HCT116 (cell line): ENCODE measurements at regions of chr3 and their contacts with region 1.

Region 1: GRCh38 chr3:11096266-11097135 is 57.8 kb upstream of the HRH1 start:
- DNase-seq: peak; percentile 74
- ATAC-seq: peak; percentile 88
- H3K4me3 ChIP-seq: peak overlapping the region; percentile 44 to 56
- H3K27ac ChIP-seq: peak overlapping the region; percentile 76
- H3K4me1 ChIP-seq: peaks cover 22 to 32% of the 10 kb centered on the region in 2 experiments; a peak in 3 of 4 replicates
- H3K27me3 ChIP-seq: no peaks in the 10 kb centered on the region
- CTCF ChIP-seq: no peak; a peak in 1 of 6 replicates
- POLR2A ChIP-seq: no peak
- RAD21 ChIP-seq: no peak

Region 2: DNA sequence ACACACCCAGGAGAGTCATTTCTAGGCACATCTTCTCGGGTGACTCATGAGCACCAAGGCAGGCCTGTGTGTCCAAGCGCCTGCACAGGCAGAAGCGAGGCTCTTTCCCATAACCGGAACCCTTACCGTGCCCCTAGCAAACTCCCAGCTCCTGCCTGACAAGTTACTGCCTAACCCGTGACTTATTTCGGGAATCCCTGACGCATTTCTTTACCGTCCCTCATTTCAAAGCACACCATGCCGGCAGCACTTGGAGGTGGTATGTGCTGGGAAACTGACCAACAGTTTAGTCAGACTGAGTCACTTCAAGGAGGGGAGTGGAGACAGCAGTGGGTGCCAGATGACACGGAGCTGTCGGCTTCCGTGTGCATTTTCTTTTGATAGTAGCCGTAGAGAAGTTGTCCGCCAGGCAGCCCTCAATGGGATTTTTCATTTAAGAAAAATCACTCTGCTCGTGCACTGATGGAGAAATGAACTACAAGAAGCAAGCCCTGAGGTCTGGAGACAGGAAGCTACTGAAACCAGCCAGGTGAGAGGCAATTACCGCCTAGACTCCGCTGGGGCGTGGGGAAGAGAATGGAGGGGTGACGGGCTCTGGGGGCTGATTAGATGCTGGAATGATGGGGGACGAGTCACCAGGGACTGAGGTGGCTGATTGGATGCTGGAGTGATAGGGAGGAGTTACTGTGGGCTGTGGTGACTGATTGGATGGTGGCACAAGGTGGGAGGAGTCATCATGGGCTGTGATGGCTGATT is 40.5 kb after region 1 on chr3:
- CTCF ChIA-PET with region 1: interaction called, 4 read pairs
- POLR2A ChIA-PET with region 1: interaction called, 8 read pairs
- RAD21 ChIA-PET with region 1: no interaction called
- intact Hi-C with region 1: loop called (anchors 1 kb)
- DNase-seq: peak; percentile 100
- ATAC-seq: peak; percentile 89
- H3K4me3 ChIP-seq: peak overlapping the region; percentile 55 to 59
- H3K27ac ChIP-seq: peak overlapping the region; percentile 93
- H3K4me1 ChIP-seq: peaks cover 37 to 60% of the 10 kb centered on the region in 2 experiments
- H3K27me3 ChIP-seq: no peaks in the 10 kb centered on the region
- CTCF ChIP-seq: no peak
- POLR2A ChIP-seq: peak; percentile 20
- RAD21 ChIP-seq: no peak